ENCODE measurements at regions of chr9 and their contacts with region 1.

Region 1: DNA sequence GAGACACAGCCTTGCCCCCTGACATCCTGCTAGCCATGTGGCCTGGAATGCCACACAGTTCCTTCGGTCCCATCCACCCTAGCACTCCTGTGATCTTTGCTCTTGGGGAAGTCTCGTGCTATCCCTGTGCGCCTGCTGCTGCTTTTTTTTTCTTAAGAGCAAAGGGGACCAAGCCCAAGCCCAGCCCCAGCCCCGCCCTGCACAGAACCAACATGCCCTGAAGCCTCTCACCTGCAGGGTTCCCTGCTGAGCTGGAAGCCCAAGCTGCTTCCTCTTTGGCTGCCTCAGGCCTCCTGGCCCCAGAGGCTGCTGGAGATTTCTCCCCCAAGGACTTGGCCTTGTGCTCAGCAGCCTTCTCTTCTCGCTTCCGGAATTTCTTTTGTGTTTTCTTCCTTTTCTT is 1.8 kb downstream of the SURF6 start:
- DNase-seq: peak; percentile 86
- H3K4me3 ChIP-seq: peak overlapping the region in 1 of 4 donors; percentile 96
- H3K27ac ChIP-seq: peak overlapping the region; percentile 83 to 91 (median 89)
- H3K4me1 ChIP-seq: peaks cover 11 to 34% (median 30%) of the 10 kb centered on the region in 4 donors
- H3K27me3 ChIP-seq: no peaks in the 10 kb centered on the region
- CTCF ChIP-seq: peak in 4 of 5 experiments; percentile 22 to 63 (median 46)
- EP300 ChIP-seq: no peak
- POLR2A ChIP-seq: peak; percentile 51

Region 2: GRCh38 chr9:133301253-133302230 is 32.6 kb before region 1 on chr9:
- in situ Hi-C with region 1: no loop called
- intact Hi-C with region 1: loop called (anchors 1 kb)
- DNase-seq: no peak
- H3K4me3 ChIP-seq: no peak overlapping the region
- H3K27ac ChIP-seq: no peak overlapping the region
- H3K4me1 ChIP-seq: no peaks in the 10 kb centered on the region
- H3K27me3 ChIP-seq: no peaks in the 10 kb centered on the region
- CTCF ChIP-seq: no peak
- EP300 ChIP-seq: no peak
- POLR2A ChIP-seq: no peak